Activated CD4-positive, alpha-beta memory T cell treated with anti-CD3 and anti-CD28 coated beads for 36 hours (primary cell): ENCODE measurements at regions of chr3 and their contacts with region 1.

Region 1: DNA sequence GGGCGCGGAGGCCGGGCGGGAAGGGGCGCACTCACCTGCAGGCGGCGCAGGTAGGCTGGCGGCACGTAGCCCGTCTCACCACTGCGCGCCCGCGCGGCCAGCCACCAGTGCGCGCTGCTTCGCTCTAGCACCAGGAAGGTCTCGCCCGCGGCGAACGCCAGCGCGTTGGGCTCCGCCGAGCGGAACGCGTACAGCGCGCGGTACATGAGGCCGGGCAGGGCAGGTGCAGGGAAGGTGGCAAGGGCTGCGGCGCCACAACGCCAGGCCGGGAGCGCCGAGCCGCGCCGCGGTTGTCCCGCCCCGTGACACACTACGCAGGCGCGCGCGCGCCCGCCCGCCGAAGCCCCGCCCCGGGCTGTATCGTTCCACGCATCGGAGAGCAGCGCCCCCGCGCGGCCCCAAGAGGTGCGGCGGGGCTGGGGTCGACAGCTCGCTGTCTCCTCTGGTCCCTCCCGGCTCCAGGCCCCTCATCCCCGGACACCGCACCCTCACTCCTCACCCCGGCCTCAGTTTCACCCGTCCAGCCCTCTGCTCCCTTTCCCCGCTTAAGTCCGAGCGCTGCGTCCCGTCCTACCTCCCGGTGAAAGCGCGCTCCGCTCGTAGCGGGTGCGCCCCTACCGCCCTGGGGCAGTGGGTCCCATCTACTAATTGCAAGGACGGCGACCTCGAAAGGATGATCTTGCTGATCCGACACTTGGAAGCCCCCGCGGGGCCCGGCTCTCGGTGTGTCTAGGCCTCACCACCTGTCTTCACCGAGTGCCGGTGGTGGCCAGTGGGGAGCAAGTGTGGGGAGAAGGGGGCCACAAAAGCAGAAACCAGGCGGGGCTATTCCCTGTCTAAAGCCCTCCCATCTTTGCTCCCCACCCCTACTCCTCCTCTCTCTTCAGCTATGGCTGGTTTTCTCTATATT is at the start of gene NCKIPSD:
- DNase-seq: peak; percentile 93
- H3K4me3 Mint-ChIP-seq: peak within 1 kb of the TSS; percentile 78
- H3K27ac Mint-ChIP-seq: peak within 1 kb of the TSS; percentile 66
- H3K4me1 Mint-ChIP-seq: peaks cover 24% of the 10 kb centered on the region
- H3K27me3 Mint-ChIP-seq: no peaks in the 10 kb centered on the region
- total RNA-seq, gene NCKIPSD: 36.5 to 38.5 TPM

Region 2: DNA sequence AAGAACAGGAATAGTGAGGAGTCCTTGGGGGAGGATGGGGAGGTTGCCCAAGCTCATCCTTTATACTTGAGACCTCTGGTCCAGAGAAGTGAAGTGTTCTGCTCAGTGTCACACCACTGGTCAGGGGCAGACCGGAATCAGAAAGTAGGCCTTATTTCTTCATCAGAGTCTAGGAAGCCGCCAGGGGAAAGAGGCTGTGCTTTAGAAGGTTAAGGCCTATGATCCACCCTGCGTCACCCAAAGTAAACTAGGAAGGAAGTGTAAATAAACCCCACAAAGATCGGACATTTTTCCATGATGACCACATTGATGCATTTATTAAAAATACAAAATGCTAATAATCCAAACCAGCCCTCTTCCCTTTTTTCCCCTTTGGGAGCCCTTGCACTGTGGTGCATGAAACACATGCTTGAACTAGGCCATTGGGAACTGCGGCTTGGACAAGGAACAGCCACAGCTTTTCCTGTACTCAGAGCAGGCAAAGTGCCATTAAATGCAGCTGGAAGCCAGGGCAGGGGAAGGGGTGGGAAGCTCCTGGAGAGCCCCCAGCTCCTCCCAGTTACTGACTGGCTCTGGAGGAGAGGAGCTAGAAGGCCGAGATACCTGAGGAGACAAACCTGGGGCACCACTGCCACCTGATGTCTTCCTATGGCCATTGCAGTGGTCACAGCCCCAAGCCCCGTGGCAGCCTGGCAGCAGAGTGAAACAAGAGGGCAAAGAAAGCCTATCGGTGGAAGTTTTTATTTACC is 534.6 kb before region 1 on chr3:
- CTCF ChIA-PET with region 1: no interaction called
- POLR2A ChIA-PET with region 1: no interaction called
- intact Hi-C with region 1: no loop called
- DNase-seq: peak; percentile 80
- H3K4me3 Mint-ChIP-seq: no peak overlapping the region
- H3K27ac Mint-ChIP-seq: no peak overlapping the region
- H3K4me1 Mint-ChIP-seq: no peaks in the 10 kb centered on the region
- H3K27me3 Mint-ChIP-seq: no peaks in the 10 kb centered on the region

Region 3: DNA sequence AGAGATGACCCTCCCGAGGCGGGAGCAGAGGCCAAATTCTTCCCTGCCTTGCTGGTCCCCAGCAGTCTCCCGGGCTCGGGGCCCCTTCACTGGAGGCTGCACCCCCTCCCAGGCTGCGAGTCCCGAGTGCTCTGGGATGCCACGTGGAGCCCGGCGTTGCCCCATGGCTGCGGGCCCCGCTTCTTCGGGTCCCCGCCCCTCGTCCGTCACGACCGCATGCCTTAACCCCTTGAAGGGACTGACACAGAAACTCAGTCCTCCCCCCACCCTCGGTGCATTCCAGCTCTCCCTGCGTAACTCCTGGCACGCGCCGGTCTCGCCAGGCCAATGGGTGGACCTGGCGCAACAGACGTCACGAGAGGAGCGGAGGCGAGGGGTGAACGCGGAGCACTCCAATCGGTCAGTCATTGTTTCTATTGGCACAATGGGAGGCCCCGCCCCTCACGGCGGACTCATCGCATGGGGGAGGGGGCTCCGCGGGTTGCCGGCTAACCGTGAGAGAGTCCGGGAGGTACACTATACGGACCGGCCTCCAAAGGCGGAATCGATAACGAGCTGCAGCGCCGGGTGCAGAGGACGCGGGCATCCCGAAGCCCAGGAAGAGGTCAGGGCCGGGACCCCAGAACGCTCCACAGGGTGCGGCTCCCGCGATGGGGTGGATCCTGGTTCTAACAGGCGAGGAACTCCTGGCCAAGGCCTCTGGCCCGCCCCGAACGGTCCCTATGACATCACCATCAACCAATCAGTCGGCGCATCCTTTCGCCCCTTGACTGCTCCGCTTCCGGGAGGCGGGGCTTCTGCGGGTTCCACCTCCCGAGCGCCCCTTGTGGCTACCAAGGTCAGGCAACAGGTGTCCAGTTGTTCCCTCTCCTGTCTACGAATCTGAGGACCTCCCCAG is 22.2 kb before region 1 on chr3:
- CTCF ChIA-PET with region 1: interaction called, 11 read pairs
- POLR2A ChIA-PET with region 1: interaction called, 5 read pairs
- intact Hi-C with region 1: no loop called
- DNase-seq: peak; percentile 97
- H3K4me3 Mint-ChIP-seq: peak overlapping the region; percentile 88
- H3K27ac Mint-ChIP-seq: peak overlapping the region; percentile 74
- H3K4me1 Mint-ChIP-seq: peaks cover 15% of the 10 kb centered on the region
- H3K27me3 Mint-ChIP-seq: peaks cover 13% of the 10 kb centered on the region

Region 4: GRCh38 chr3:48696156-48696555 is 10.3 kb after region 1 on chr3:
- CTCF ChIA-PET with region 1: interaction called, 10 read pairs
- POLR2A ChIA-PET with region 1: no interaction called
- intact Hi-C with region 1: no loop called
- DNase-seq: no peak
- H3K4me3 Mint-ChIP-seq: no peak overlapping the region
- H3K27ac Mint-ChIP-seq: no peak overlapping the region
- H3K4me1 Mint-ChIP-seq: peaks cover 23% of the 10 kb centered on the region
- H3K27me3 Mint-ChIP-seq: no peaks in the 10 kb centered on the region

Region 5: DNA sequence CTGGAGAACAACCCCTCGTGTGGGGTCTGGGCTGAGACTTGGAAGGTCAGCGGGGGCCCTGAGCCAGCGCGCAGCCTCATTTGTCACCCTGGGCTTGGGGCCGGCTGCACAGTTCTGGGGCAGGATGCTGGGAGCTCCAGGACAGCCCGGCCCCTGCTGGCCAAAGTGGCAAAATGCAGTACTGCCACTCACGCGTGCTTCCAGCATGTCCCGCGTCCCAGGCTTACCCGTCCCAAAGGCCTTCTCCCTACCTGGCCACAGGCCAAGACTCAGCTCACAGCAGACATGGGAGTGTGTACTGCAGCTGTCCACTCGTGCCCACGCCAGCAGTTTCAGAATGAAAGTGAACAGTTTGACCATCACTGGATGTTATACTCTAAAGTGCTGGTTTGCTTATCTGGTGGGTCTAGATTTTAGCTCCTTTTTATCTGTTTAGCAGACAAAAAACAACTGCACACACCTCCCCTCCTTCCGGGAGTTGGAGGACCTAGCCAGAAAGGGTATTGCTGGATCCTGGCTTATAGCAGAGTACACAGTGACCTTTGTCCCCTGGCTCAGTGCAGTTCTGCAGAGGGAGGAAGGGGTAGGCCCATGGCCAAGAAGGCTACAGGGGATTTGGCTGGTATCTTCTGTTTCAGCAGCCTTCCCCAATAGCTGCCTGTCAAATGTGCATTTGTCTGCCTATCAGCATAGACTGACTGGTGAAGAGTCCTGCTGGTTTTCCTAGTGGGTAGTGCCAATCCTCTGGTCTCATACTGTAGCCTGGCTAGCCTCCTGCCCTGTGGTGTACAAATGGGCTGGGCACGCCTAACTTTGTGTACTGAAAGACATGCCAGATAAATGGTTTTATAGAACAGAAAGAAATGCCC is 54.3 kb after region 1 on chr3:
- CTCF ChIA-PET with region 1: interaction called, 15 read pairs
- POLR2A ChIA-PET with region 1: no interaction called
- intact Hi-C with region 1: no loop called
- DNase-seq: peak; percentile 74
- H3K4me3 Mint-ChIP-seq: no peak overlapping the region
- H3K27ac Mint-ChIP-seq: no peak overlapping the region
- H3K4me1 Mint-ChIP-seq: no peaks in the 10 kb centered on the region
- H3K27me3 Mint-ChIP-seq: no peaks in the 10 kb centered on the region

Region 6: GRCh38 chr3:49295489-49296058 is 609.7 kb after region 1 on chr3:
- CTCF ChIA-PET with region 1: no interaction called
- POLR2A ChIA-PET with region 1: no interaction called
- intact Hi-C with region 1: no loop called
- DNase-seq: peak; percentile 28
- H3K4me3 Mint-ChIP-seq: no peak overlapping the region
- H3K27ac Mint-ChIP-seq: no peak overlapping the region
- H3K4me1 Mint-ChIP-seq: no peaks in the 10 kb centered on the region
- H3K27me3 Mint-ChIP-seq: no peaks in the 10 kb centered on the region